ENCODE measurements at regions of chr1 and their contacts with region 1.

Region 1: DNA sequence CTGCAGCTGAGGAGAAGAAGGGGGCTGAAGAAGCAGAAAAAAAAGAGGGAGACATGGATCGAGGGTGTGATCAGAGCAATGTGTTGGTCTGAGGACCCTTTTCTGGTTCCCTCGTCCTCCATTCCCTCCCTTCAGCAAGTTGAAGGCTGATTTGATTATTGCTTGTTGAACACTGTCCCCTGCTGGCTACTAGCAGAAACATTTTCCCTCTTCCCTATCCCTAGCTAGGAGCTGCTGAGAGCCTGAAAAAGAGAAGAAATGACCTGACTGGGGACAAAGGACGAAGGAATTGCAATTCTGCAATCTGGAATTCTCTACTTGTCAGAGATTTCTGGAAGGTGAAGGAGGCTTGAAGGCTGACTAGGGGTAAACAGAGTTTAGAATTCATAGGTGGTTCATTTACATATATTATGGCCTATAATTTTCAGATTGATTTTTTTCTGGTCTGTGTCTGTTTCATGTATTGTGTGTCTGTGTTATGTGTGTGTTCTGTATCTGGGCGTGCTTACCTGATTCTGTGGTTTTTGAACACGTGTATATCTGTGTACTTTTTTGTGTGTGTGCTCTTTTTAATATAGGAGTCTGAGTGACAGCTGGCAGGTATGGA is 9.8 kb downstream of the NHLH1 start:
- DNase-seq: peak; percentile 73
- CTCF ChIP-seq: peak; percentile 92

Region 2: DNA sequence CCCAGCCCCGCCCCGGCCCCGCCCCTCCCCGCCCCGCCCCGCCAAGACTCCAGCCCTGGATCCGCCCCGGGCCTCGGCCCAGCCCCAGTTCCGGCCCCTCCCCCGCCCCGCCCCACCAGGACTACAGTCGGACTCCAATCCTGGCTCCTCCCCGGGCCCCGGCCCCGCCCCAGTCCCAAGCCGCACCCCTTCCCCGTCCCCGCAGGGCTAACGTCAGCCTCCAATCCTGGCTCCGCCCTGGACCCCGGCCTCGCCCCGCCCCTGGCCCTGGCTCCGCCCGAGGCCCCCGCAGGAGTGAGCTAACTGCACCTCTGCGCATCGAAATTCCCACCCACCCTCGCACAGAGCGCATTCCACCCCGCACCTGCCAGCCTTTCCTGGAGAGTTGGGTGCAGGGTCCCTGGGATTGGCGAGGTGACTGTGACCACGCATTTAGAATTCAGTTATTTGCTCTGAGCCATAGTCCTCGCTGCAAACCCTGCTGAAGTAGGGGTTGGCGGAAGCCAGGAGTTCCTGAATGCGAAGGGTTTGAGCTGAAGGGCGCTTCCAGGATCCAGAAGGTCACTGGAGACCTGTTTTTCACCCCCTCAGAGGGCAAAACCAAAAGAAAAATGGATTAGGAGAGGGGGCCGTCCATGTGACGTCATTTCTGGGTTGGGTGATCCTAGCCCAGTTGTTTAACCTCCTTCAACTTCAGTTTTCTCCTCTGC is 277.6 kb before region 1 on chr1:
- in situ Hi-C with region 1: loop called (anchors 10 kb)
- DNase-seq: peak; percentile 100
- CTCF ChIP-seq: no peak

Region 3: GRCh38 chr1:160193091-160193819 is 183.4 kb before region 1 on chr1:
- in situ Hi-C with region 1: loop called (anchors 10 kb)
- DNase-seq: peak; percentile 80
- CTCF ChIP-seq: peak; percentile 95